Left ventricle myocardium inferior (tissue), 1 donor: ENCODE measurements at regions of chr12 and their contacts with region 1.

Region 1: GRCh38 chr12:91332302-91332701 is 149.7 kb upstream of the DCN start:
- DNase-seq: no peak
- H3K4me3 ChIP-seq: no peak overlapping the region
- H3K27ac ChIP-seq: no peak overlapping the region
- H3K4me1 ChIP-seq: no peaks in the 10 kb centered on the region
- H3K27me3 ChIP-seq: no peaks in the 10 kb centered on the region
- CTCF ChIP-seq: peak; percentile 30

Region 2: GRCh38 chr12:90978117-90978770 is 354.1 kb before region 1 on chr12:
- intact Hi-C with region 1: loop called (anchors 10 kb)
- DNase-seq: no peak
- H3K4me3 ChIP-seq: no peak overlapping the region
- H3K27ac ChIP-seq: peak overlapping the region; percentile 57
- H3K4me1 ChIP-seq: no peaks in the 10 kb centered on the region
- H3K27me3 ChIP-seq: no peaks in the 10 kb centered on the region
- CTCF ChIP-seq: peak; percentile 68